H1 (cell line): ENCODE measurements at regions of chr11 and their contacts with region 1.

Region 1: DNA sequence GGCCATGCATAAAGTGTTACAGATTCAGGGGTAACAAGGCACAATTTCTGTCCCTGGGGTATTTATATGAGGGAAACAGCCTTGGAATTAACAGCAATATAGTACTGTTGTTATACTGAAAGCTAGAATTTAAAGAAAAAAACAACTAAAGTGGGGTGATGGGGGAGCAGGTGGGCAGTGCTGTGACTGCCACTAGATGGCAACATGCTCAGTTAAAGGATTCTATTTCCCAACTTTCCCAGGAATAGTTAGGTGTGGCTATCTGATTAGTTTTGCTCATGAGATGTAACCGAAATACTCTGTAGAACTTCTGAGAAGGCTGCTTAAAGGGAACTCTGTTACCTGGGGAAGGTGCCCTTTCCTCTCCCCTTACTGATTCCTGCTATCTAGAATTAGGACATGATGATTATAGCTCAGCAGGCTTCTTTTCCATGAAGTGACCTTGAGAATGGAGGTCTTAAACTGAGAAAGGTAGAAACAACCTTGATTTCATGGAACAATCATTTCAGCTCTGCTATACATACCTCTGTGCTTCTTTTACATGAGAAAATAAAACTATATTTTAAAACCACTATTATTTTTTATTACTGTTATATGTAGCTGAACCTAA is 102.6 kb downstream of the RELT start:
- DNase-seq: no peak
- H3K4me3 ChIP-seq: no peak overlapping the region
- H3K27ac ChIP-seq: no peak overlapping the region
- H3K4me1 ChIP-seq: peaks cover 0 to 3% (median 1%) of the 10 kb centered on the region in 4 experiments; a peak in 2 of 7 replicates
- H3K27me3 ChIP-seq: no peaks in the 10 kb centered on the region
- CTCF ChIP-seq: peak; percentile 74 to 93 (median 76)
- EP300 ChIP-seq: no peak
- POLR2A ChIP-seq: no peak
- RAD21 ChIP-seq: peak; percentile 65 to 75

Region 2: DNA sequence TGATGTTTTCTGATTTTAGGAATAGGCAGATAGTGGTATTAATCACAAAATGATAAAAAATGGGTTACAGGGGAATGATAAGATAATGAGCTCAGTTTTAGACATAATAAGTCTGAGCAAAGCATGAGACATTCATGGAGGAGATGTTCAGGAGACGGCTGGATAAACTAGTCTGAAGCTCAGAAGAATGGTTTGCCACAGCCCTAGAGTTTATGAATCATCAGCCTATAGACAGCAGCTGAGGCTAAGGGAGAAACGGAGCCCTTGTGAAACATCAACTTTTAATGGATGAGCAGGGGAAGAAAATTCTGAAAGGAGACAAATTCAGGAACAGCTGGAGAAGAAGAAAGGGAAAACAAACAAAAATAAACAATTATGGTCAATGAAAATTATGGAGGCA is 15.5 kb before region 1 on chr11:
- CTCF ChIA-PET with region 1: interaction called, 41 read pairs
- POLR2A ChIA-PET with region 1: interaction called, 4 read pairs
- DNase-seq: no peak
- H3K4me3 ChIP-seq: no peak overlapping the region
- H3K27ac ChIP-seq: no peak overlapping the region
- H3K4me1 ChIP-seq: no peaks in the 10 kb centered on the region
- H3K27me3 ChIP-seq: no peaks in the 10 kb centered on the region
- CTCF ChIP-seq: no peak
- EP300 ChIP-seq: no peak
- POLR2A ChIP-seq: no peak
- RAD21 ChIP-seq: no peak

Region 3: DNA sequence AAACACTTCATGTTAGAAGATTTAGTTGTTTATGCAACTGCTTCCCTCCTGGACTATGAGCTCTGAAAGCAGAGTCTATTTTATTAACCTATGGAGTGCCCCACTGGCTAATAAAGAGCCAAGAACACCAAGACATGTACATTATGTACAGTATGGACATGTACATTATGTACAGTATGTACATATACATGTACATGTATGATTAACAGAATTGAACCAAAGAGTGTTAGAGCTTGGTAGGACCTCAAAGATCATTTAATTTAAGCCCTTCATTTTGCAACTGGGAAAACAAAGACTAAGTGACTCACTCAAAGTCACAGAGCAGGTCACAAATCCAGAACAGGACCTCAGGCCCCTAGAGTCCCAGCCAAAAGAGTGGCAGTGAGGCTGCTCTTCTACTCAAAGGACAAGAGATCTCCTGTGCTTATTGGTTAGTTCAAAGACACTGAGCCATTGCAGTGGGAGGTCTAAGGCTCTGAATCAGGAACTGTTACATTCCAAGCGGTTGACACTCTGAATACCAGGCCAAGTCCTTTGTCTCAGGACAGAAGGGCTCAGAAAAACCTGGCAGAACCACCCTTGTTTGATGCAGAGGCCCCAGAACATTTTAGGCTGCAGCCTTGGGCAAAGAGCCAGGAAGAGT is 15.2 kb after region 1 on chr11:
- CTCF ChIA-PET with region 1: interaction called, 31 read pairs
- POLR2A ChIA-PET with region 1: interaction called, 3 read pairs
- DNase-seq: peak; percentile 46
- H3K4me3 ChIP-seq: no peak overlapping the region
- H3K27ac ChIP-seq: 0 out of 2 replicates have a peak overlapping the region, but pooled peaks have one; percentile 21
- H3K4me1 ChIP-seq: peaks cover 0 to 8% (median 3%) of the 10 kb centered on the region in 4 experiments; a peak in 4 of 7 replicates
- H3K27me3 ChIP-seq: no peaks in the 10 kb centered on the region
- CTCF ChIP-seq: no peak
- EP300 ChIP-seq: no peak
- POLR2A ChIP-seq: no peak
- RAD21 ChIP-seq: no peak

Region 4: GRCh38 chr11:73597956-73598718 is 119.3 kb after region 1 on chr11 and contains the start of gene FAM168A:
- CTCF ChIA-PET with region 1: interaction called, 19 read pairs
- POLR2A ChIA-PET with region 1: interaction called, 4 read pairs
- DNase-seq: peak; percentile 89 to 91
- H3K4me3 ChIP-seq: peak within 1 kb of the TSS; percentile 80 to 95 (median 90)
- H3K27ac ChIP-seq: peak within 1 kb of the TSS; percentile 78; the same call in 1 of the 2 replicates
- H3K4me1 ChIP-seq: peaks cover 3 to 10% (median 7%) of the 10 kb centered on the region in 4 experiments; a peak in 6 of 7 replicates
- H3K27me3 ChIP-seq: no peaks in the 10 kb centered on the region
- CTCF ChIP-seq: peak in 1 of 3 experiments; percentile 15; a peak in 1 of 4 replicates
- EP300 ChIP-seq: no peak; a peak in 1 of 3 replicates
- POLR2A ChIP-seq: peak in 1 of 2 experiments; percentile 79; a peak in 2 of 3 replicates
- RAD21 ChIP-seq: peak in 1 of 2 experiments; percentile 25; a peak in 2 of 4 replicates
- total RNA-seq, gene FAM168A: 21.6 and 22.8 TPM in 2 replicates